Calu3 (cell line): ENCODE measurements at regions of chr14 and their contacts with region 1.

Region 1: GRCh38 chr14:63655789-63656573 is 14.3 kb upstream of the WDR89 start:
- DNase-seq: no peak
- H3K4me3 Mint-ChIP-seq: no peak overlapping the region
- H3K27ac Mint-ChIP-seq: no peak overlapping the region
- H3K4me1 Mint-ChIP-seq: peaks cover 18% of the 10 kb centered on the region
- H3K27me3 Mint-ChIP-seq: no peaks in the 10 kb centered on the region
- CTCF ChIP-seq: no peak

Region 2: DNA sequence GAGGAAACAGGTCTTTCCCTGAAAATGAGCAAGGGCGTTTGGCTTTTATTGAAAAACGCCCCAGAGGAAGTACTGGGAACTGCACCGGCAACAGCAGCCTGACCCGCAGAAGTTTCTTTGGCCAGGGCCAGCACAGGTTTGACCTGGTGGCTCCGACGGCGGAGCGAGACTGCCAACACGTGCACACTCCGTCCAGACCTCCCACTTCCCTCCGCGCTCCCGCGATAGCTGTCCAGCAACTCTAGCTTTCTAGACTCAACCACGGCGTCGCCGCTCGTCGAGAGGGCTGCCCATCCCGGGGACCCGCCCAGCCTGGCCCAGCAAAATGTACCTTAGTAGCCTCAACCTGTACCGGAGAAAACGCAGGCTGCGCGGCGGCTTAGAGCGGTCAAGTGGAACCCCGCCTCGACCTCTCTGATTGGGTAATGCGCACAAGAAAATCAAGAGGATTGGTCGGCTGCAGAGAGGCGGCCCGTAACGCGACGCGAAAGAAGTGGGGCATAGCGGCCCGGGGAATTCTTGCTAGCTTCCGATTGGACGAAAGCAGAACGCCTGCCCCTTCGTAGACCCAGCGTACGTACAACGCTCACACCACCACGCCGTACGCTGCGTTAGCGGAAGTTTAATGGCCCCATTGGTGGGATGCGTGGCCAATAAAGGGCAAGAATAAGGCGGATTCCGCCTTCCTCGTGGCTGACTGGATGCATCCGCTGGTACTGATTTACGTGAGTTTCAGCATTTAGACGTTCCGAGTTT is 14.3 kb before region 1 on chr14 and contains the start of gene WDR89:
- CTCF ChIA-PET with region 1: interaction called, 5 read pairs
- intact Hi-C with region 1: loop called (anchors 2 kb)
- DNase-seq: peak; percentile 95
- H3K4me3 Mint-ChIP-seq: peak within 1 kb of the TSS; percentile 84
- H3K27ac Mint-ChIP-seq: peak within 1 kb of the TSS; percentile 97
- H3K4me1 Mint-ChIP-seq: peaks cover 9% of the 10 kb centered on the region
- H3K27me3 Mint-ChIP-seq: no peaks in the 10 kb centered on the region
- CTCF ChIP-seq: peak; percentile 78
- total RNA-seq, gene WDR89: 19.7 and 20.8 TPM in 2 replicates